Activated CD4-positive, alpha-beta T cell treated with anti-CD3 and anti-CD28 coated beads for 36 hours (primary cell): ENCODE measurements at regions of chr10 and their contacts with region 1.

Region 1: GRCh38 chr10:132886211-132887099 is 55.9 kb downstream of the CFAP46 start:
- DNase-seq: peak; percentile 2
- ATAC-seq: no peak
- H3K4me3 Mint-ChIP-seq: no peak overlapping the region
- H3K27ac Mint-ChIP-seq: no peak overlapping the region
- H3K4me1 Mint-ChIP-seq: no peaks in the 10 kb centered on the region
- H3K27me3 Mint-ChIP-seq: peaks cover 2% of the 10 kb centered on the region

Region 2: DNA sequence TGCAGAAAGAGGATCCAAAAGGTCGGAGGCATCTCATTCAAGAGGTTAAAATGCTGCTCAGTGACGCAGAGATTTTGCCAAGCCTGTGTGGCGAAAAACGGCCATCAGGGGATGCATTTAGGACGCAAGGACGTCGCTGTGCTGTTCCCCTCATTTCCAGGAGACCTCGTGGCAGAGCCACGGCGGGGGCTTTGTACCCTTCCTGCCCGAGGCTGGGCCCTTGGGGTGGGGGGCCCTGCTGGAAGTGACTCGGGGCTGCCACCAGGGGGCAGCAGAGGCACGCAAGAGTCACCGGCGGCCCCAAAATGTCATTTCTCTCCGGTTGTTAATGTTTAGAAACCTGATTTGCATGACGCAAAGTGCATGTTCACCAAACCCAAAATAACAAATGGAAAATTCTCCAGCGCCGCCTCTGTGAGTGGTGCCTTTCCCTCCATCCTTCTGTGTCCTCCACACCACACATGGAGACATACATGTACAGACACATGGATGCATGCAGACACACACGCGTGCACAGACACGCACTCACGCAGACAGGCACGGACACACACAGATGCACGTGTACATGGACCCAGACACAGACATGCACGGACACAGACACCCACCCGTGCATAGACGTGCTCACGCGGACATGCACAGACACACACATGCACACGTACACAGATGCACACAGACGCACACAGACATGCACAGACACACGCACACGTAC is 49.5 kb before region 1 on chr10:
- CTCF ChIA-PET with region 1: no interaction called
- POLR2A ChIA-PET with region 1: no interaction called
- intact Hi-C with region 1: loop called in 1 of 2 experiments (anchors 1 kb)
- DNase-seq: peak; percentile 68
- ATAC-seq: peak; percentile 60
- H3K4me3 Mint-ChIP-seq: no peak overlapping the region
- H3K27ac Mint-ChIP-seq: no peak overlapping the region
- H3K4me1 Mint-ChIP-seq: no peaks in the 10 kb centered on the region
- H3K27me3 Mint-ChIP-seq: peaks cover 2% of the 10 kb centered on the region